HEK293T (cell line): ENCODE measurements at regions of chr7 and their contacts with region 1.

Region 1: DNA sequence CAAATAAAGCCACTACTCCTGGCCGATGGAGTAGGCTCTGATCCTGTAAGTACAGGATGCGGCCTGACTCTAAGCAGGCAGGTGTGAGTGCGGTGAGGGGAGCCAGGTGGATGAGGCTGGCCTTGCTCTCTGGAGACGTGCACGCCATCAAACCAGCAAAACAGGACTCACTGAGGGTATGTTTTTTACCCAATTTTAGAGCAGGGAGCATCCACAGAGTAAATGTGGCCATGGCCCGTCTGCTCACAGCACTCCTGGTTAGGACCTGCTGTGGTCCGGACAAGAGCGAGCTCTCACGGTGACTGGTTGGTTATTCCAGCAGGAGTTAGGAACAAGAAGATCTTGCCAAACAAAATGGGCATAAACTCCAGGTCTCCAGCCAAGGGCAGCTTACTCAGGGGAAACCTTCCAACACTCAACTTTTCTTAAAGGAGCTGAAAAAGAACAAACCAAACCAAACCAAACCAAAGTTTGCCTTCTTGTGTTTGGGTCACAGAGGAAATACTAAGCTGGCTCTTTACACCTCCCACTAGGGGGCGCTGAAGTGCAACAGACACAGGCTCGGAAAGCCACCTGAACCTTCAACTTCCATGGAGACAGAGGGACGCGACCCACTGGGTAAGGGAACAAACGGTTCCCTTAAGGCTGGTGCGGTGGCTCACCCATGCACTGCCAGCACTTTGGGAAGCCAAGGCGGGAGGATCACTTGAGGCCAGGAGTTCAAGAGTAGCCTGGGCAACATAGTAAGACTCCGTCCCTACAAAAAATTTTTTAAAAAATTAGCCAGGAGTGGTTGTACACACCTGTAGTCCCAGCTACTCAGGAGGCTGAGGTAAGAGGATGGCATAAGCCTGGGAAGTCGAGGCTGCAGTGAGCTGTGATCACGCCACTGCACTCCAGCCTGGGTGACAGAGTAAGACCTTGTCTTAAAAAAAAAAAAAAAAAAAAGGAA is 122.4 kb downstream of the CLEC2L start:
- DNase-seq: peak; percentile 89

Region 2: GRCh38 chr7:139602143-139602722 is 43.6 kb before region 1 on chr7:
- CTCF ChIA-PET with region 1: interaction called, 11 read pairs
- POLR2A ChIA-PET with region 1: no interaction called
- DNase-seq: peak; percentile 58

Region 3: DNA sequence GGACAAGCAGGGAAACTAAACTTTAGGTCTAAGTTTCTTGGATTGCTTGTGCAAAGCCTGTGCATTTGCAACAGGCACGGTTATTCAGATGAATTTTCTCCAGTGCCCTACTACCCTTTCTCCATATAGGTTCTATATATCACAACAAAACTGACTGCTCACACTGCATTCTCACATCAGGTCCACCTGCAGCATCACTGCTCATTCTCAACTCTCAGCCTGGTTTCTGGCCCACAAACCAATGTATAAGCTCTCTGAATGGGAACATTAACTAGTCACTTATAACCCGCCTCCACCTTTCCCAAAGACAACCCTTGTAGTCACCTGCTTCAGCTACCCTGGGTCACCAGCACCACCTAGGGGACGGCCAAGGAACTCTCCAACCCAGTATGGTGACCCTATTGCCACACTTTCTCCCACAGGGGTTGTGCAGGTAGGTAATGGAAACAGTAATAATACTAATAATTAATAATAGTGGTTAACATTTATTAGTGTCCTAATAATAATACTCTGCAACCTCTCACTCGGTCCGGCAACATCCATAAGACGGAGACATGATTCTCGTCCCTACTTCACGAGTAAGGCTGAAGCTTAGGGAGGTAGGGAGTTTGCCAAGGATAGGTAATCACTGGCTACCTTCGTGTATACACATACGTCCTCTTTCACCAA is 25.0 kb before region 1 on chr7:
- CTCF ChIA-PET with region 1: interaction called, 13 read pairs
- POLR2A ChIA-PET with region 1: no interaction called
- DNase-seq: peak; percentile 85

Region 4: GRCh38 chr7:139631520-139632031 is 14.3 kb before region 1 on chr7:
- CTCF ChIA-PET with region 1: interaction called, 11 read pairs
- POLR2A ChIA-PET with region 1: no interaction called
- DNase-seq: no peak